ENCODE measurements at regions of chr2 and their contacts with region 1.

Region 1: DNA sequence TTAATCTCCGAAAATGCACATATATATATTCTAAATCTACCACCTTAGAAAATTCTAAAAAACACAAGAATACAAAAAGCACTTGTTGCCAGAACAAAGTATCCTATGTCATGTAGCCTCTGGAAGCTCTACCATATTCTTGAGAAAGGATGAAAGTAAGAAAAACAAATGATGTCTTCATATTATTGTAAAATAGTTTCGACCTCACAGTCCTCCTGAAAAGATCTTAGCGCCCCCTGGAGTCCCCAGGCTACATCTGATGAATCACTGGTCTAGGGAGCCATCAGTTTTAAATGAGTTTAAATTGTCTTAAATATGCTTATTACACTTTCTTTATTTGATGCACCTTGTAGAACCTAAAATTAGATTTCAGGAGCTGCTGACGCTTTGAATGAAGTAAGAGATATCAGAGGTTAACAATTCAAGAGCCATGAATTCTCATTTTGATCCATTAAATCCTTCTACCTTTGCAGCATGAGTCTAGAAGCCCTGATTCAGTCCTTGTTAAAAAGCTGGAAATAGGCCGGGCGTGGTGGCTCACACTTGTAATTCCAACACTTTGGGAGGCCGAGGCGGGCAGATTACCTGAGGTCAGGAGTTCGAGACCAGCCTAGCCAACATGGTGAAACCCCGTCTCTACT is 138.8 kb downstream of the MCFD2 start:
- DNase-seq: peak; percentile 55 to 82 (median 76)
- H3K4me3 ChIP-seq: no peak overlapping the region
- H3K27ac ChIP-seq: no peak overlapping the region
- H3K4me1 ChIP-seq: no peaks in the 10 kb centered on the region
- H3K27me3 ChIP-seq: no peaks in the 10 kb centered on the region

Region 2: GRCh38 chr2:46547223-46548102 is 229.3 kb before region 1 on chr2:
- CTCF ChIA-PET with region 1: no interaction called
- POLR2A ChIA-PET with region 1: no interaction called
- DNase-seq: peak in 2 of 3 donors; percentile 69 to 71
- H3K4me3 ChIP-seq: peak overlapping the region in 4 of 7 experiments; percentile 6 to 59 (median 43)
- H3K27ac ChIP-seq: peak overlapping the region; percentile 29 to 60
- H3K4me1 ChIP-seq: peaks cover 28 to 62% (median 56%) of the 10 kb centered on the region in 4 experiments
- H3K27me3 ChIP-seq: no peaks in the 10 kb centered on the region

Region 3: GRCh38 chr2:46657042-46657504 is 119.7 kb before region 1 on chr2:
- CTCF ChIA-PET with region 1: interaction called, 46 read pairs
- POLR2A ChIA-PET with region 1: no interaction called
- DNase-seq: peak; percentile 35 to 58 (median 53)
- H3K4me3 ChIP-seq: no peak overlapping the region
- H3K27ac ChIP-seq: no peak overlapping the region
- H3K4me1 ChIP-seq: no peaks in the 10 kb centered on the region
- H3K27me3 ChIP-seq: peaks cover 0 to 2% (median 0%) of the 10 kb centered on the region in 5 experiments